HepG2 (cell line): ENCODE measurements at regions of chr16 and their contacts with region 1.

Region 1: DNA sequence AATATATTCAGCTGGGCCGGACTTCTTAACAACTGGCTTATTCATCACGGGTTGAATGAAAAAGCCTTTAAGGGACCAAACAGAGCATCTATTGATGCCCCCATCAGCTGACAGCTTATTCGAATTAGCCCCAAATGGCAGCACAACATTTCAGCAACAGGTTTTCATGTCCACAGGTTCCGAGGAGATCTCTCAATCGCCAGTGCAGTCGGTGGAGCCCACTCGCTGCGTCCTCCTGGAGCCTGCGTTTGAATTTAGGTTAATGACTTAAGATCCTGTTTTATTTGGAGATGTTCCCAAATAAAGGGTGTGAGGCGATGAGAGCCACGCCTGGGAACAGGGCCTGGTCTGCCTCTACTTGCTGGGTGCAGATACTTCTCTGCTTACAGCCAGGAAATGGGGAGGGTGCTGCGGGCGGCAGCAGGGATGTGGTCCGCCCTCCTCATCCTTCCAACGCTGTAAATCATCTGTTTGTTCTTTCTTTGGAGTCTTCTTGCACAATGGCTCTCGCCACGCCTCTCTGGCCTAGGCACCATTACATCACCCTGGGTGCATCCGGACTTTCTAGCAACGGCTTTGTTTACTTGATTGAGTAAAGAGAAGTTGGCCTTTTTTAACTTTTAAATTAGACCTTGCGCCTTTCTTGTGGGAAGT is 22.6 kb downstream of the NDE1 start:
- DNase-seq: peak; percentile 100
- ATAC-seq: peak; percentile 97
- H3K4me3 ChIP-seq: peak overlapping the region in 2 of 3 experiments; percentile 7 to 37; a peak in 4 of 6 replicates
- H3K27ac ChIP-seq: peak overlapping the region; percentile 78
- H3K4me1 ChIP-seq: peaks cover 53% of the 10 kb centered on the region
- H3K27me3 ChIP-seq: no peaks in the 10 kb centered on the region
- CTCF ChIP-seq: peak; percentile 44; the same call in 1 of the 2 replicates
- EP300 ChIP-seq: peak; percentile 95 to 97
- POLR2A ChIP-seq: peak; percentile 65 to 74
- RAD21 ChIP-seq: no peak; the same call in 1 of the 2 replicates

Region 2: GRCh38 chr16:15650019-15650697 is 22.5 kb before region 1 on chr16 and contains the start of gene NDE1:
- CTCF ChIA-PET with region 1: no interaction called
- POLR2A ChIA-PET with region 1: interaction called, 53 read pairs
- in situ Hi-C with region 1: no loop called
- intact Hi-C with region 1: loop called (anchors 2 kb)
- DNase-seq: peak; percentile 93
- ATAC-seq: peak; percentile 99
- H3K4me3 ChIP-seq: peak within 1 kb of the TSS; percentile 88 to 100 (median 93)
- H3K27ac ChIP-seq: peak within 1 kb of the TSS; percentile 74
- H3K4me1 ChIP-seq: peaks cover 70% of the 10 kb centered on the region
- H3K27me3 ChIP-seq: peaks cover 0 to 6% of the 10 kb centered on the region in 2 experiments; a peak in 1 of 5 replicates
- CTCF ChIP-seq: peak; percentile 34; the same call in 1 of the 2 replicates
- EP300 ChIP-seq: no peak
- POLR2A ChIP-seq: peak; percentile 61 to 81; a peak in 3 of 4 replicates
- RAD21 ChIP-seq: peak; percentile 34; the same call in 1 of the 2 replicates
- total RNA-seq, gene NDE1: 72.5 and 79.2 TPM in 2 replicates

Region 3: DNA sequence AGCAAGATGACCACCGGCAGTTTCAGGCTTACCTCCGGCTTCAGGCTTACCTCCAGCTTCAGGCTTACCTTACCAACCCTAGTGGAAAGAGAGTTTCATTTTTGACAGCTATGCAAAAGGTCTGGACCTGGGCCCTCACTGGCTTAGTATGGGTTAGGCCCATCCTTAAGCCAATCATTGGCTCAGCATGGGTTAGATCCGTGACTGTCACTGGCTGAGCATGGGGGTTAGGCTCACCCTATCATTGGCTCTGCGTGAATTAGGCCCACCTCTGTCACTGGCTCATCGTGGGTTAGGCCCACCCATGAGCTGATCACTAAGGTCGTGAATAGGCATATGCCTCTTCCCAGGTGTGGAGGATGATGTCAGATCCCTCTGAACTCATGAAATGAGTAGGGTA is 14.5 kb before region 1 on chr16:
- CTCF ChIA-PET with region 1: no interaction called
- POLR2A ChIA-PET with region 1: interaction called, 12 read pairs
- in situ Hi-C with region 1: no loop called
- intact Hi-C with region 1: no loop called
- DNase-seq: no peak
- ATAC-seq: peak; percentile 23; the same call in 1 of the 3 replicates
- H3K4me3 ChIP-seq: no peak overlapping the region
- H3K27ac ChIP-seq: no peak overlapping the region
- H3K4me1 ChIP-seq: peaks cover 41% of the 10 kb centered on the region
- H3K27me3 ChIP-seq: no peaks in the 10 kb centered on the region
- CTCF ChIP-seq: no peak
- EP300 ChIP-seq: no peak
- POLR2A ChIP-seq: no peak
- RAD21 ChIP-seq: no peak